ENCODE measurements at regions of chr11 and their contacts with region 1.

Region 1: GRCh38 chr11:765025-765801 is 12.1 kb downstream of the GATD1 start:
- DNase-seq: peak; percentile 62
- H3K4me3 Mint-ChIP-seq: no peak overlapping the region
- H3K27ac Mint-ChIP-seq: no peak overlapping the region
- H3K4me1 Mint-ChIP-seq: peaks cover 16% of the 10 kb centered on the region
- H3K27me3 Mint-ChIP-seq: no peaks in the 10 kb centered on the region
- CTCF ChIP-seq: peak; percentile 54

Region 2: GRCh38 chr11:662689-663274 is 102.4 kb before region 1 on chr11:
- CTCF ChIA-PET with region 1: interaction called, 4 read pairs
- POLR2A ChIA-PET with region 1: no interaction called
- intact Hi-C with region 1: loop called (anchors 1 kb)
- DNase-seq: peak; percentile 62
- H3K4me3 Mint-ChIP-seq: no peak overlapping the region
- H3K27ac Mint-ChIP-seq: no peak overlapping the region
- H3K4me1 Mint-ChIP-seq: no peaks in the 10 kb centered on the region
- H3K27me3 Mint-ChIP-seq: no peaks in the 10 kb centered on the region
- CTCF ChIP-seq: peak; percentile 81

Region 3: DNA sequence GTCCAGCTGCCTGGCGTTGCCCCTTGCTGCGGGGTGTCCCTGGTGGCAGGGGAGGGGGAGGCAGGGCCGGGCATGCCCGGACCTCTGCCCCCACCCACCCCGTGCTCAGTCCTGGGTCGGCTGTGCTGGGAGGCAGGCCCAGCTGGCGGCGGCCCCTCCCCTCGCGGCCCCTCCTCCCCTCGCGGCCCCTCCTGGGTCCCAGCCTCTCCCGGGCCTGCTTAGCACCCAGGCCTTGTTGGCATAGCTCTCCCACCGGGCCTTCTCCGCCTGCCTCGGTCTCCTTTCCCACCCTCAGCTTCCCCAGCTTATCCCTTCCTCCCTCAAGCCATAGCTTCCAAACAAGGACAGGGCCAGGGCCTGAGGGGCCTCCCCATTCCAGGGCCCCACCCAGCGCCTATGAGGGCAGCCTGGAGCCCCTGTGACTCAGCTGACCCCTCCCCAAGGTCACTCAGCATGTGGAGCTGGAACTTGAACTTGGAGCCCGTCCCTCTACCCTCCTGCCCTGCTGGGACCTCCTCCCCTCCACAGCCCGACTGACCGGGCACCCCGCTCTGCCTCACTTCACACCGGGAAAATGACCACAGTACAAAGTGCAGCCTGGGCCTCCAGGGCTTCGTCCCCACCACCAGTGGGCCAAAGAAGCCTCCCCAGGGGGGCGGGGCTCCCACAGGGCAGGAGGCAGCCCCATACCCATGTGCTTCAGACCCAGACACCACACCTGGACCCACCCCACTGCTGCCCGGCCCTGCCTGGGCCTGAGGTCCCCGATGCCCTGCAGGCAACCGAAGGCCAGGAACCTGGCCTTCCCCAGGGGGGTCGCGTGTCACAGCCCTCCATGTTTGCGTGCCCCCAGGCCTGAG is 58.0 kb before region 1 on chr11:
- CTCF ChIA-PET with region 1: no interaction called
- POLR2A ChIA-PET with region 1: interaction called, 13 read pairs
- intact Hi-C with region 1: no loop called
- DNase-seq: peak; percentile 53
- H3K4me3 Mint-ChIP-seq: peak overlapping the region; percentile 86
- H3K27ac Mint-ChIP-seq: peak overlapping the region; percentile 91
- H3K4me1 Mint-ChIP-seq: peaks cover 25% of the 10 kb centered on the region
- H3K27me3 Mint-ChIP-seq: no peaks in the 10 kb centered on the region
- CTCF ChIP-seq: no peak

Region 4: GRCh38 chr11:737371-737770 is 27.8 kb before region 1 on chr11:
- CTCF ChIA-PET with region 1: interaction called, 3 read pairs
- POLR2A ChIA-PET with region 1: interaction called, 10 read pairs
- intact Hi-C with region 1: no loop called
- DNase-seq: no peak
- H3K4me3 Mint-ChIP-seq: no peak overlapping the region
- H3K27ac Mint-ChIP-seq: no peak overlapping the region
- H3K4me1 Mint-ChIP-seq: no peaks in the 10 kb centered on the region
- H3K27me3 Mint-ChIP-seq: no peaks in the 10 kb centered on the region
- CTCF ChIP-seq: no peak

Region 5: GRCh38 chr11:777288-778255 is 12.4 kb after region 1 on chr11 and contains the start of gene GATD1:
- CTCF ChIA-PET with region 1: interaction called, 10 read pairs
- POLR2A ChIA-PET with region 1: interaction called, 42 read pairs
- intact Hi-C with region 1: no loop called
- DNase-seq: peak; percentile 84
- H3K4me3 Mint-ChIP-seq: peak within 1 kb of the TSS; percentile 85
- H3K27ac Mint-ChIP-seq: peak within 1 kb of the TSS; percentile 81
- H3K4me1 Mint-ChIP-seq: peaks cover 11% of the 10 kb centered on the region
- H3K27me3 Mint-ChIP-seq: no peaks in the 10 kb centered on the region
- CTCF ChIP-seq: no peak
- total RNA-seq, gene GATD1: 54.6 and 67.7 TPM in 2 replicates